Calu3 (cell line): ENCODE measurements at regions of chr20 and their contacts with region 1.

Region 1: DNA sequence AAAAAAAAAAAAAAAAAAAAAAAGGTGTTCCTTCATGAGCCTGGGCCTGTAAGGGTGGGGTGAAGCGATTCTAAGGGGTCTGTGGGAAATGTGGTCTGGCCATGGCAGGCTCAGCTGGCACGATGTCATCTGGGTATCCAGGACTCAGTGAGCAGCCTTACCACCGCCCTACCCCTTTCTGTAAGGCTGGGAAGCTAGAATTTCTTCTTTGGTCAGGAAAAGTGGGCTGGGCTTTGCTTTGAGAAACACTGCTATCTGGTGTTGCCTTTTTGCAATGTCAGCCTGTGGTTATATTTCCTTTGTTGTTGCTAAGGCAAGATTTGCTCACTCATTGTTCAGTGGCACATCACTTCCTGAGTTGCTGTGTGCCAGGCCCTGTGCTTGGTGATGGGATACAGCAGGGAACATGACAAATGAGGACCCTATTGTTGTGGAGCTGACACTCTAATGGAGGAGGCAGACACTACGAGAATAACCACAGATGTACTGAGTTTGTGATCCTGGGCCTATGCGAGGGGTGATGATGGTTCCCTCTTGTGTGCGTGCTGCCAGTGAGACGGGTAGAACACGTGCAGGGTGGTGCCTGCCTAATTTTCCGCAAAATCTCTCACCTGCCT is 45.9 kb upstream of the ZNFX1 start:
- DNase-seq: peak; percentile 56
- H3K4me3 Mint-ChIP-seq: no peak overlapping the region
- H3K27ac Mint-ChIP-seq: no peak overlapping the region
- H3K4me1 Mint-ChIP-seq: no peaks in the 10 kb centered on the region
- H3K27me3 Mint-ChIP-seq: peaks cover 72% of the 10 kb centered on the region
- CTCF ChIP-seq: no peak

Region 2: GRCh38 chr20:49245921-49246740 is 77.6 kb before region 1 on chr20:
- CTCF ChIA-PET with region 1: interaction called, 18 read pairs
- intact Hi-C with region 1: loop called (anchors 5 kb)
- DNase-seq: peak; percentile 52
- H3K4me3 Mint-ChIP-seq: no peak overlapping the region
- H3K27ac Mint-ChIP-seq: no peak overlapping the region
- H3K4me1 Mint-ChIP-seq: no peaks in the 10 kb centered on the region
- H3K27me3 Mint-ChIP-seq: no peaks in the 10 kb centered on the region
- CTCF ChIP-seq: peak; percentile 79

Region 3: GRCh38 chr20:49278036-49278817 is 45.5 kb before region 1 on chr20 and contains the start of gene ZNFX1:
- CTCF ChIA-PET with region 1: interaction called, 10 read pairs
- intact Hi-C with region 1: no loop called
- DNase-seq: peak; percentile 100
- H3K4me3 Mint-ChIP-seq: peak within 1 kb of the TSS; percentile 82
- H3K27ac Mint-ChIP-seq: peak within 1 kb of the TSS; percentile 95
- H3K4me1 Mint-ChIP-seq: peaks cover 53% of the 10 kb centered on the region
- H3K27me3 Mint-ChIP-seq: peaks cover 4% of the 10 kb centered on the region
- CTCF ChIP-seq: no peak
- total RNA-seq, gene ZNFX1: 94.1 and 156 TPM in 2 replicates

Region 4: DNA sequence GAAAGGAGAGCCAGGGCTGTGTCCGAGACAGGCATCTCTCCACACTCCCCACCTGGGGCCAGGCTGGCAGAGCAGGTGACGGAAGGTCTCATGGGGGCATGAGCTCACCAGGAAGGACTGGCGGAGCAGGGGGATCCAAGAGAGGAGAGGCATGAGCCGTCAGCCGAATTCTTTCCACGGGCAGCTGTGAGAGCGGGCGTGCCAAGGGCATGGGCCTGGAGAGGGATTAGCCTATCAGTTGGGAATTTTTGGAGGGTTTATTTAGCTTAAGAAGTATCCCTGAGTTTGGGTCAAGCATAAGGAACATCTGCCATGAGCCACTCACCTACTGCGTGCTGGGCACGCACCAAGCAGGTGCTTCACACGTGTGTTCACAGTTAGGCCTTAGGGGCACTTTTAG is 14.3 kb after region 1 on chr20:
- CTCF ChIA-PET with region 1: no interaction called
- intact Hi-C with region 1: no loop called
- DNase-seq: no peak
- H3K4me3 Mint-ChIP-seq: no peak overlapping the region
- H3K27ac Mint-ChIP-seq: no peak overlapping the region
- H3K4me1 Mint-ChIP-seq: no peaks in the 10 kb centered on the region
- H3K27me3 Mint-ChIP-seq: peaks cover 62% of the 10 kb centered on the region
- CTCF ChIP-seq: no peak